ENCODE measurements at regions of chrX and their contacts with region 1.

Region 1: GRCh38 chrX:38985375-38985774 is 184.1 kb downstream of the MID1IP1 start:
- DNase-seq: peak; percentile 18
- H3K4me3 Mint-ChIP-seq: no peak overlapping the region
- H3K27ac Mint-ChIP-seq: no peak overlapping the region
- H3K4me1 Mint-ChIP-seq: no peaks in the 10 kb centered on the region
- H3K27me3 Mint-ChIP-seq: peaks cover 55% of the 10 kb centered on the region
- CTCF ChIP-seq: no peak

Region 2: GRCh38 chrX:38664285-38664684 is 321.1 kb before region 1 on chrX:
- CTCF ChIA-PET with region 1: interaction called, 6 read pairs
- POLR2A ChIA-PET with region 1: no interaction called
- intact Hi-C with region 1: loop called (anchors 5 kb)
- DNase-seq: peak; percentile 64
- H3K4me3 Mint-ChIP-seq: no peak overlapping the region
- H3K27ac Mint-ChIP-seq: no peak overlapping the region
- H3K4me1 Mint-ChIP-seq: no peaks in the 10 kb centered on the region
- H3K27me3 Mint-ChIP-seq: peaks cover 37% of the 10 kb centered on the region
- CTCF ChIP-seq: peak; percentile 62

Region 3: DNA sequence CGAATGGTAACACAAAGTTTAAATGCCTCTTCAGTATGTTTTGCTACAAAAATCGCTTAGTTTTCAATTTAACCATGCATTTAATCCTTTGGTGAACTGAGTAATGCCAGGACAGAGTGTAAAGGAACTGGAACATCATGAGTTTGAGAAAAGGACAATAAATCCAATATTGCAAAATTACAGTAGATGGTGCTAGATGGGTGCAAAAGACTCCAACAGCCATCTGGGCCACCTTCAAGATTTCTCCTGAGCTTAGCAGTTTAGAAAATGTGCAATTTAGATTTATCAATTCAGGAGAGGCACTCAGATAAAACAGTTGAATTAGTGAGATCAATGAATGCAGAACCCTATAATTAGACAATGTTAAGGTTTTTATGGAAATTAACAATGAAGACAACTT is 217.3 kb before region 1 on chrX:
- CTCF ChIA-PET with region 1: interaction called, 7 read pairs
- POLR2A ChIA-PET with region 1: no interaction called
- intact Hi-C with region 1: loop called (anchors 1 kb)
- DNase-seq: peak; percentile 35
- H3K4me3 Mint-ChIP-seq: no peak overlapping the region
- H3K27ac Mint-ChIP-seq: no peak overlapping the region
- H3K4me1 Mint-ChIP-seq: no peaks in the 10 kb centered on the region
- H3K27me3 Mint-ChIP-seq: peaks cover 40% of the 10 kb centered on the region
- CTCF ChIP-seq: peak; percentile 48

Region 4: DNA sequence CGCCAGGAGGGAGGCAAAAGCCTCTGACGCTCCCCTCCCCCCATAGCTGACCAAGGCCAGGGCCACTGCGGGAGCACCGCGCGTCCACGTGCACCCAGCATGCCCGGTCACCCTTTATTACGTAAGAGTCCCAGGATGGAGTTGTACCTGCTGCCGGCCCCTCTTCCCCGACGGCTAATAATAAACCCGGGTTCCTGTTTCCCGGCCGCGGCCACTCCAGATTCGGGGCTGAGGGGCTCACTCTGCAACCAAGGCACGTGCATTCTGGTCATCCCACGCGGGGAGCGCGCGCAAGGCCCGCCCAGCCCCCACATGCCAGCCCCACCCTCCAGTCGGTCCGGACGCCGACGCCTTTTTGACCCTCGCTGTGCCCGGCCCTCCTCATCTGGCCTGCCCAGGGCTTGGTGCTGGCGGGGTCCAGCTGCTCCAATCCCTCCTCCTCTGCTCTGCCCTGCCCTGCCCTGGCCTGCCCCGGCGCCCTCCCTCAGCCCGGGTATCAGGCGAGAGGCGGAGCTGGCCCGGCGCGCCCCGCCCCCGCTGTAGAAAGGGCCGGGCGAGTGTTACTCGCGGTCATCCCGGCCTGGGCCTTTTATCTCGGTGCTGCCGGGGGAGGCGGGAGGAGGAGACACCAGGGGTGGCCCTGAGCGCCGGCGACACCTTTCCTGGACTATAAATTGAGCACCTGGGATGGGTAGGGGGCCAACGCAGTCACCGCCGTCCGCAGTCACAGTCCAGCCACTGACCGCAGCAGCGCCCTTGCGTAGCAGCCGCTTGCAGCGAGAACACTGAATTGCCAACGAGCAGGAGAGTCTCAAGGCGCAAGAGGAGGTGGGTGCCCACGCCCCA is 181.6 kb before region 1 on chrX:
- CTCF ChIA-PET with region 1: interaction called, 4 read pairs
- POLR2A ChIA-PET with region 1: interaction called, 3 read pairs
- intact Hi-C with region 1: loop called (anchors 1 kb)
- DNase-seq: peak; percentile 84
- H3K4me3 Mint-ChIP-seq: peak overlapping the region; percentile 83
- H3K27ac Mint-ChIP-seq: peak overlapping the region; percentile 81
- H3K4me1 Mint-ChIP-seq: peaks cover 3% of the 10 kb centered on the region
- H3K27me3 Mint-ChIP-seq: peaks cover 11% of the 10 kb centered on the region
- CTCF ChIP-seq: no peak